ENCODE measurements at regions of chr12 and their contacts with region 1.

Region 1: DNA sequence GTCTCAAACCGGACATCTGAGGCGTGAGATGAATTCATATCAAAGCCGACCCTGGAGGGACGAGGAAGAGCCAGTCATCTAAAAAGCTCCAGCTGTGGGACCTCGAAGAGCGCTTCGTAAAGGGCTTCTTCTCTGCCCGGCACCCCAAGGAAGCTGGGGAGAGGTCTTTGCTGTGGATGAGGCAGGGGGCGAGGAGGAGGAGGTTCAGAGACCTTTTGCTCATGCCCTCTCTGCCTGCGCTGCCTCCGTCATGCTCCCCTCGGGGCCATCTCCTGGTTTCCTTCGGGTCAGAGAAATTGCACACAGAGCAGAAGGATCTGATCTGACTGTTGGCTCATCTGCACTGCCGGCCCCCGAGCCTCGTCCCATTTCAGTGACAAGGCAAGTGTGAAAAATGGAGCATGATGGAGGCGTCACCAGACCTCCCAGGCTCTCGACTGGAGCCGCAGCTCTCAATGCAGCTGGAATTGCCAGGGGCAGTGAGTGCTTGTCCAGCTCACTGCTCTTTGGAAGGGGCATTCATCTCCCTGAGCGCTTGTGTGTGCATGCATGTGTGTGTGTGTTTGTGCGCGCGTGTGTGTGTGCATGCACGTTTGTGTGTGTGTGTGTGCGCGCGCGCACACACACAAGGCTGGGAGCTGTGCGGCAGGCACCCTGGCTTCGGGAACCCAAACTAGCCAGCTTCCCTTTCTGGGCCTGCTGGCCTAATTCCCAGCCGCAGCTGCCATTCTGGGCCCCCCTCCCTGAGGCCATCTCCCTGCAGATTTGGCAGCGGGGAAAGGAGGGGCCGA is 9.2 kb downstream of the CABP1 start:
- DNase-seq: no peak
- H3K4me3 Mint-ChIP-seq: peak overlapping the region; percentile 27
- H3K27ac Mint-ChIP-seq: no peak overlapping the region
- H3K4me1 Mint-ChIP-seq: peaks cover 13% of the 10 kb centered on the region
- H3K27me3 Mint-ChIP-seq: peaks cover 53% of the 10 kb centered on the region

Region 2: GRCh38 chr12:120710031-120710804 is 60.6 kb after region 1 on chr12 and contains the start of gene UNC119B:
- intact Hi-C with region 1: loop called (anchors 1 kb)
- DNase-seq: peak; percentile 66
- H3K4me3 Mint-ChIP-seq: peak within 1 kb of the TSS; percentile 88
- H3K27ac Mint-ChIP-seq: peak within 1 kb of the TSS; percentile 82
- H3K4me1 Mint-ChIP-seq: peaks cover 29% of the 10 kb centered on the region
- H3K27me3 Mint-ChIP-seq: no peaks in the 10 kb centered on the region
- total RNA-seq, gene UNC119B: 25.1 and 27.0 TPM in 2 replicates

Region 3: DNA sequence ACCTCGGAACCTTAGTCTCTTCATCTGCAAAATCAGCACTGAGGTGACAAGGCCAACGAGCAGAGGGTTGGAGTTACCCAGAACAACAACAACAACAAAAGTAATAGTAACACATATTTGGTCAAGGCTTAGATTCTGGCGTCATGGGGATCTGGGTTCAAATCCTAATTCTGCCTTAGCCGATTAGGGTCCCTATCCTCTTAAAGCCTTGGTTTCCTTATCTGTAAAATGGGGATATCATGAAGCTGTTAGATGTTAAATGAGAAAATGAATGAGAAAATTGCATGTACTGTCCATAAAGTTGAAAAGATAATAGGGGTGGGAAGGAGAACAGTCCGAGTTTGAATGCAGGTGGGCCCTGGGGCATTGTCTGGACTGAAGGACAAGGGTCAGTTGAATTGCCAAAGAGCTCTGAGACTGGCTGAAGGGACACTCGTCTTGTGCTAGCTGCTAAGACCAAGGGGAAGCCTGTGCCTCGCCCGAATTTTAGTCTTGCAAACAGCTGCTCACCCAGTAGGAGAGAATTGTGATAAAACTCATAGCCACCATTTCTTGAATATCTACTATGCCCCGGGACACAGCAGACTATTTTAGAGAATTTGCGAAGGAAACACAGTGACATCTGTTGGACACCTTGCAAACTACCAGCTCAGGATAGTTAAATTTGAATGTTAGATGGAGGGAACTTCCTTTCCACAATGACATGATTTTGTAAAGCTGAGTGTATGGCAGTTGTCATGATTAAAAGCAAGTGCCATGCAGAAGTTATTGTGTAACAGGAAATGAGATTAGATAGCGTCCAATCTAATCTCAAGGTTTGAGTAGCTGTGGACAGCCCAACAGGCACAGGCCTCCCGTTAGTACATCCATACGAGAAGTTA is 321.9 kb after region 1 on chr12:
- intact Hi-C with region 1: loop called (anchors 2 kb)
- DNase-seq: peak; percentile 24
- H3K4me3 Mint-ChIP-seq: no peak overlapping the region
- H3K27ac Mint-ChIP-seq: no peak overlapping the region
- H3K4me1 Mint-ChIP-seq: peaks cover 5% of the 10 kb centered on the region
- H3K27me3 Mint-ChIP-seq: no peaks in the 10 kb centered on the region

Region 4: GRCh38 chr12:121110211-121110940 is 460.7 kb after region 1 on chr12:
- intact Hi-C with region 1: loop called (anchors 5 kb)
- DNase-seq: peak; percentile 47
- H3K4me3 Mint-ChIP-seq: no peak overlapping the region
- H3K27ac Mint-ChIP-seq: no peak overlapping the region
- H3K4me1 Mint-ChIP-seq: peaks cover 3% of the 10 kb centered on the region
- H3K27me3 Mint-ChIP-seq: no peaks in the 10 kb centered on the region